AG04450 (cell line): ENCODE measurements at regions of chr2 and their contacts with region 1.

Region 1: DNA sequence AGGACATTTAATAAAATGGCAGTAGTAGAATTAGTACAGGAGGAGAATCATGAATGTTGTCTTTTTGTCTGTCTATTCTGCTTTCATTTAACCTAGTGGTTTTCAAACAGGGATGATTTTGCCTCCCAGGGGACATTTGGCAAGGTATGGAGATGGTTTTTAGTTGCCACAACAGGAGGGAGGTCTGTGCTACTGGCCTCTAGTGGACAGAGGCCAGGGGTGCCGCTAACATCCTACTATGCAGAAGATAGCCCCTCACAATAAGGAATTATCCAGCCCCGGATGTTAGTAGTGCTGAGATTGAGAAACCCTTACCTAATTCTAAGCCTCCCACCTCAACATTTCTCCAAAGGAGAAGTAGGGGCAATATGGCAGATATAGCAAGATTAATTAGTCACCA is 18.3 kb downstream of the FASTKD2 start:
- DNase-seq: no peak
- H3K4me3 ChIP-seq: no peak overlapping the region
- H3K27ac ChIP-seq: no peak overlapping the region
- H3K27me3 ChIP-seq: no peaks in the 10 kb centered on the region
- CTCF ChIP-seq: peak; percentile 66

Region 2: DNA sequence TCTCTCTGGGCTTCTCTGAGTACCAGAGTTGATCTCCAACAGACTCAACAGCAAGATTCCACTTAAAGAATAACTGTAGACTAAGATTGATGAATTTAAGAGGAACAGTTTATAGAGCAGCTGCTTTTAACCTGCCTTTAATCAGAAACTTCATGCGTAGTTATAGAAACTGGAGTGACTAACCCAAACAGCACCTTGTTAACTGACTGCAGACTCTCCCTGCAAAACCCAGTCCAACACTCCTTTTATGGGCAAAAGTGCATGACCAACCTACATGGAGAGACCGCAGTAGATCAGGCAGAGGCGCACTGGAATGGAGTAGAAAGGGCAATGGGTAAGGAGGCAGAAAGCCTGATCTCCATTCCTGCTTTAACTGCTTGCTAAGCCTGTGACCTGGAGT is 990.8 kb before region 1 on chr2:
- CTCF ChIA-PET with region 1: no interaction called
- POLR2A ChIA-PET with region 1: no interaction called
- DNase-seq: peak; percentile 77
- H3K4me3 ChIP-seq: no peak overlapping the region
- H3K27ac ChIP-seq: peak overlapping the region; percentile 59
- H3K27me3 ChIP-seq: no peaks in the 10 kb centered on the region
- CTCF ChIP-seq: no peak

Region 3: DNA sequence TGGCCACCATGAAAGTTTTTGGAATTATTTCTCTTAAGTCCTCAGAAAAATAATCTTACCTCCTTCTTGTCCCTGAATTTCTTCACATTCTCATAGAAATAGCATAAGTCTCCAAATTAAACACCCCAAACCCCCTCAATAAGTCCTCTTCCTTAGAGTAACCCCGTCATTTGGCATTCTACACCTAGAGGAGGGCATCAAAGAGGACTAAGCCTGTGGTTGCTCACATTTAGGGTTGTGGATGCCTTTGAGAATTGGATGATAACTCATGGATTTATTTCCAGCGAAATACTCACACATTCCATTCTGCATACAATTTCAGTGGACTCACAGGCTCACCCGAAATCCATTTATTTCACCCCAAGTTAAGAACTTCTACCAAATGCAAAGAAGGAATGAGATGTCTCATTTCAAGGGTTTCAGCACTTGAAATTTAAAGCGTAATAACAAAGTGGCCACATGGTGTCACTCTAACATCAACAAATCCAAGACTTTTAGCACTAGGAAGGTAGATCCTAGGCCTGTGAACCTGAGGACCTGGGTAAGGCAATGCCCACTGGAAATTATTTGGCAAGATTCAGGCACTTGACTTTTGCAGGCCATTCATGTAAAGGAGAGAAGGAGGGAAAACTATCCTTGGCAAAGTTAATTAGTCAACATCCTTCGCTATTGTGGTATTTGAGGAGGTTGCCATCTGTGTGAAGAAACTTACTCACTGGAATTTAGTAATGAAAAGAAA is 90.2 kb before region 1 on chr2:
- CTCF ChIA-PET with region 1: interaction called, 48 read pairs
- POLR2A ChIA-PET with region 1: no interaction called
- DNase-seq: peak; percentile 27
- H3K4me3 ChIP-seq: no peak overlapping the region
- H3K27ac ChIP-seq: no peak overlapping the region
- H3K27me3 ChIP-seq: no peaks in the 10 kb centered on the region
- CTCF ChIP-seq: peak; percentile 66

Region 4: DNA sequence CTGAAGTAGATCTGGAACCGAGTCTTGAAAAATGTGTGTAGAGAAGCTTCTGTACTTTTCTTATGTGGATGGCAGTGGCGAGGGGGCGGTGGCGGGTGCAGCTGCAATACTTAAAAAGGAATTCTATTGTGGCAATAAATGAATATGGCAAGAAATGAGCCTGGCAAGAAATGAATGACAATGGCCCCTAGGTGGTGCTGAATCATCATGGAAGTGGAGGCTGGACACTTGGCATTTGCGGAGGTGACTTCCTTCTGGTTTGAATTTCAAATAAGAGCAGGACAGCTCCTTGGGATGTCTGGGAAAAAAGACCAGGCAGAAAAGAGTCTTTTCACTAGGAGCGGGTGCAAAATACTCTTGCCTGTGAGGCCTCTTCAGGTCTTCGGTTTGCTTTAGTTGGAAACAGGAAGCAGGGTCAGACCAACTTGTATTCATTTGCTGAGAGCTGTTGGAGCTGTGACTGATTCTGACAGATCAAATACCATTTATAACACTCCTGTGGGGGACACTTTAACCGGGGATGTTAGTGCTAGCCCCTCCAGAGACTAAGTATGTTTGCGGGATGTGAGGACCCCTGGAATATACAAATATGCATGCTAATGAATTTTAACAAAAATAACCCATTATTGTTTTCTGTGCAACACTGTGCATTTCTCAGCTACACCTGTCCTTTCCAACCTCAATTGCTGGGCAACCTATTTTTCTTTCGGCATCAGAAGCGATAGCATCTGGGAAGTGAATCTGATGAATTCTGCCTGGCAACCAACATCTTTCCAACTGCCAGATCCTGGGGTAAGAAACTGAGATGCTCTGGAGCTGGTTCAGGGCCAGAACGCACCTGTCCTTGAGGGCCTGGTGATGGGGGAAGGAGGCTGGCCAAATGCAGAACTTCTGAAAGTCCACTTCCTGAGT is 17.0 kb after region 1 on chr2:
- CTCF ChIA-PET with region 1: interaction called, 16 read pairs
- POLR2A ChIA-PET with region 1: no interaction called
- DNase-seq: peak; percentile 26
- H3K4me3 ChIP-seq: no peak overlapping the region
- H3K27ac ChIP-seq: no peak overlapping the region
- H3K27me3 ChIP-seq: no peaks in the 10 kb centered on the region
- CTCF ChIP-seq: peak; percentile 66